Transverse colon (tissue), 4 donors: ENCODE measurements at regions of chr16 and their contacts with region 1.

Region 1: DNA sequence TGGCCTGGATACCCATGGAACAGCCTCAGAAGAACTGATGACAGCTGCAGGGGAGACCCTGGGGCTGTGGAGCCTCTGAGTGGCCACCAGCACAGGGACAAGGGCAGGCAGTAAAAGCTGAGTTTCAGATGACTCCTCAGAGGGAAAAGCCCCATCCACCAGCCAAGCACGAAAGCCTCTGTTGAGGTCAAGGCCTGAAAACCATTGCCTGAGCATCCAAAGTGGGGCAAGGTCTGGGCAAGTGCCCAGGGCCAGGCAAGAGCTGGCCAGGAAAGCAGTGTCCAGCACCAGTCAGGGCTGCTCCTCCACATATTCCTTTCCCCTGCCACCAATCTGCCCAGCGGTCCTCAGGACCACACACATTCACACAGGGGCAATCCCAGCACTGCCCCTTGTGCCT is 16.4 kb downstream of the ATP6V0D1 start:
- DNase-seq: no peak
- H3K4me3 ChIP-seq: no peak overlapping the region
- H3K27ac ChIP-seq: peak overlapping the region; percentile 90 to 95 (median 94)
- H3K4me1 ChIP-seq: peaks cover 53 to 66% (median 61%) of the 10 kb centered on the region in 4 donors
- H3K27me3 ChIP-seq: no peaks in the 10 kb centered on the region
- CTCF ChIP-seq: no peak
- EP300 ChIP-seq: no peak
- POLR2A ChIP-seq: no peak

Region 2: GRCh38 chr16:67055712-67056487 is 408.7 kb before region 1 on chr16:
- in situ Hi-C with region 1: no loop called
- intact Hi-C with region 1: no loop called
- DNase-seq: no peak
- H3K4me3 ChIP-seq: no peak overlapping the region
- H3K27ac ChIP-seq: peak overlapping the region in 1 of 4 donors; percentile 6
- H3K4me1 ChIP-seq: no peaks in the 10 kb centered on the region
- H3K27me3 ChIP-seq: no peaks in the 10 kb centered on the region
- CTCF ChIP-seq: no peak
- EP300 ChIP-seq: no peak
- POLR2A ChIP-seq: no peak

Region 3: DNA sequence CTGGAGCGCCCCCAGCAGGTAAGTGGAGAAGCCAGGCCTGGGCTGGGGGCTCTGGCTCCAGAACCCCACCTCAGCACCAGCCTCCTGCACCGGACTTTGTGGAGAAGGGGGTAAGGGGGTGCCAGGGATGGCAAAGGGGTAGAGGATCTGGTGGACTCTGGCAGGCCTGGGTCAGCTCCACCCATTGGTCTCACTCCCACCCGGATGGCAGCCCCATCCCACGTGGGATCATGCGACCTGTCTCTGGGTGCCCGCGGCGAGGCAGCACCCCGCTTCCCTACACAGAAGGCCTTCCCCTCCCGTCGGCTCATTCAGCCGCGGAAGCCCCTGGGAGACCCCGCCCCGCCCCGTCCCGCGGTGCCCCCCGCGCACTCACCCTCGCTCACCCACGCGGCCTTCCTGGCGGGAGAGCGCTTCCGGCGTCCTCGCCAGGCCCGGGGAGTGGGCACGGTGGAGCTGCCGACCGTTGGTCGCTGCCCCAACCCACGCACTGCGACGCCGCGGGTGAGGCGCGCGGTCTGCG is 185.7 kb before region 1 on chr16:
- in situ Hi-C with region 1: no loop called
- intact Hi-C with region 1: no loop called
- DNase-seq: peak; percentile 40
- H3K4me3 ChIP-seq: peak overlapping the region; percentile 52 to 78 (median 58)
- H3K27ac ChIP-seq: peak overlapping the region; percentile 52 to 78 (median 66)
- H3K4me1 ChIP-seq: peaks cover 0 to 23% (median 21%) of the 10 kb centered on the region in 4 donors
- H3K27me3 ChIP-seq: no peaks in the 10 kb centered on the region
- CTCF ChIP-seq: peak in 4 of 5 experiments; percentile 8 to 49 (median 28)
- EP300 ChIP-seq: no peak
- POLR2A ChIP-seq: no peak

Region 4: GRCh38 chr16:67428146-67428731 is 36.3 kb before region 1 on chr16:
- in situ Hi-C with region 1: no loop called
- intact Hi-C with region 1: loop called (anchors 2 kb)
- DNase-seq: peak; percentile 84
- H3K4me3 ChIP-seq: no peak overlapping the region
- H3K27ac ChIP-seq: peak overlapping the region; percentile 88 to 94 (median 90)
- H3K4me1 ChIP-seq: peaks cover 14 to 36% (median 26%) of the 10 kb centered on the region in 4 donors
- H3K27me3 ChIP-seq: no peaks in the 10 kb centered on the region
- CTCF ChIP-seq: peak; percentile 82 to 95 (median 87)
- EP300 ChIP-seq: no peak
- POLR2A ChIP-seq: no peak